Naive thymus-derived CD4-positive, alpha-beta T cell (primary cell): ENCODE measurements at regions of chr3 and their contacts with region 1.

Region 1: GRCh38 chr3:152291649-152292066 is 22.9 kb downstream of the MBNL1 start:
- DNase-seq: no peak
- ATAC-seq: peak; percentile 58
- H3K4me3 ChIP-seq: no peak overlapping the region
- H3K4me3 Mint-ChIP-seq: peak overlapping the region; percentile 51 to 78 (median 73)
- H3K27ac ChIP-seq: peak overlapping the region; percentile 40
- H3K27ac Mint-ChIP-seq: peak overlapping the region; percentile 30 to 87 (median 71)
- H3K4me1 ChIP-seq: peaks cover 62 to 82% of the 10 kb centered on the region in 2 donors
- H3K4me1 Mint-ChIP-seq: peaks cover 54 to 96% (median 85%) of the 10 kb centered on the region in 7 donors
- H3K27me3 ChIP-seq: no peaks in the 10 kb centered on the region
- H3K27me3 Mint-ChIP-seq: no peaks in the 10 kb centered on the region

Region 2: DNA sequence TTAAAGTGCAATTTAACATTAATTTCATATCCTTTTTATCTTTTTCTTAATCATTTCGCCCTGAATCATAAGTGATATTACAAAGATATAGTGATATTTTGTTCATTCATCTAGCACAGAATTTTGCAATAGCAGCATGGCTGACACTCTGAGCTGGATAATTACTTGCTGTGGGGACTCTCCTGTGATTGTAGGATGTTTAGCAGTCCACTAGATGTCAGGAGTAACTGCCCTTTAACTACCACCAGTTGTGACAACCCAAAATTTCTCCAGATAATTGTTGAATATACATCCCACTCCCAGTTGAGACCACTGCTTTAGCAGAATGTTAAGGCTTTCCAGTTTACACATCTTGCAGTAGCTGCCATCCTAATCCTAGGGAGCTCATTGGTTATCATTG is 219.7 kb before region 1 on chr3:
- CTCF ChIA-PET with region 1: interaction called, 3 read pairs
- POLR2A ChIA-PET with region 1: no interaction called
- intact Hi-C with region 1: loop called (anchors 5 kb)
- DNase-seq: peak in 6 of 9 donors; percentile 10 to 43 (median 32)
- ATAC-seq: peak; percentile 75
- H3K4me3 ChIP-seq: no peak overlapping the region
- H3K4me3 Mint-ChIP-seq: no peak overlapping the region
- H3K27ac ChIP-seq: no peak overlapping the region
- H3K27ac Mint-ChIP-seq: no peak overlapping the region
- H3K4me1 ChIP-seq: peaks cover 0 to 5% of the 10 kb centered on the region in 2 donors
- H3K4me1 Mint-ChIP-seq: peaks cover 0 to 6% (median 3%) of the 10 kb centered on the region in 7 donors
- H3K27me3 ChIP-seq: no peaks in the 10 kb centered on the region
- H3K27me3 Mint-ChIP-seq: peaks cover 0 to 6% (median 0%) of the 10 kb centered on the region in 5 donors

Region 3: GRCh38 chr3:152281133-152281713 is 10.4 kb before region 1 on chr3:
- CTCF ChIA-PET with region 1: interaction called, 3 read pairs
- POLR2A ChIA-PET with region 1: interaction called, 17 read pairs
- intact Hi-C with region 1: loop called (anchors 1 to 2 kb)
- DNase-seq: no peak
- ATAC-seq: peak; percentile 12
- H3K4me3 ChIP-seq: peak overlapping the region; percentile 18
- H3K4me3 Mint-ChIP-seq: peak overlapping the region; percentile 64 to 79 (median 72)
- H3K27ac ChIP-seq: peak overlapping the region; percentile 49
- H3K27ac Mint-ChIP-seq: peak overlapping the region; percentile 6 to 94 (median 73)
- H3K4me1 ChIP-seq: peaks cover 47 to 86% of the 10 kb centered on the region in 2 donors
- H3K4me1 Mint-ChIP-seq: peaks cover 55 to 95% (median 85%) of the 10 kb centered on the region in 7 donors
- H3K27me3 ChIP-seq: no peaks in the 10 kb centered on the region
- H3K27me3 Mint-ChIP-seq: no peaks in the 10 kb centered on the region

Region 4: DNA sequence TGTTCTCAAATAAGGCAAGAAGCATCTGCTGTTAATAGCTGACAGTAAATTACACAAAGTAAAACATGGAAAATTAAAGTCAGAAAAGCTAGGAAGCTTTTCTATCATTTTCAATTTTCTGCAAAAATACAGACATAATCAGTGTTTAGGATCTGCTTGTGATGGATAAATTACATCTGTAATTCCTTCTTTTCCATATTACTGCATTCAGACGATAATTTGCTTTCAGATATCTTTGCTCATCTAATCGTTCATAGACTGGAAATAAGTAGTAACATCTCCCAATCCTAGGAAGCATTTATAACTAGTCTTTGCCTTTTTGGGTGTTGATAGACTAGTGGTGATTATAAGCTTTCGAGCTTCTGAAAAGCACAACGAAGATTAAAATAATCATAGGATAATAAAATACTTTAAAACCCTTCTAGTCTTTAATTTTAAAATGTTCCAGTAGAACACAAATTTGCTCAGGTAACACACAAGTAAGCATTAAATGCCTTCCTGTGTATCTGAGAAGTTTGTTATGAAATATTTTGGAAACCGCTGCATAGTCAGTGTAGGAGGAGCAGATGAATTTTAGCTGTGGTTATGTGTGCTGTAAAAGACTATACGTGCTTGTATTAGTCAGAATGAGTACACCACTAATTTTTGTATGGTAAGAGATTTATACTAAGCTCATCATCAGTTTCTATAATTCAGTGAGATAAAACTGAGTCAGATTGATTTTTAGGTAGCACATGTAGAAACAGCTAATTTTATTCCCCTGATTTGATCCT is 18.1 kb after region 1 on chr3:
- CTCF ChIA-PET with region 1: no interaction called
- POLR2A ChIA-PET with region 1: interaction called, 5 read pairs
- intact Hi-C with region 1: loop called in 1 of 2 experiments (anchors 2 kb)
- DNase-seq: peak in 3 of 9 donors; percentile 14 to 31 (median 27)
- ATAC-seq: peak; percentile 69
- H3K4me3 ChIP-seq: no peak overlapping the region
- H3K4me3 Mint-ChIP-seq: peak overlapping the region in 8 of 10 donors; percentile 9 to 57 (median 30)
- H3K27ac ChIP-seq: peak overlapping the region; percentile 56
- H3K27ac Mint-ChIP-seq: peak overlapping the region; percentile 15 to 88 (median 66)
- H3K4me1 ChIP-seq: peaks cover 50 to 68% of the 10 kb centered on the region in 2 donors
- H3K4me1 Mint-ChIP-seq: peaks cover 31 to 89% (median 83%) of the 10 kb centered on the region in 7 donors
- H3K27me3 ChIP-seq: no peaks in the 10 kb centered on the region
- H3K27me3 Mint-ChIP-seq: no peaks in the 10 kb centered on the region

Region 5: DNA sequence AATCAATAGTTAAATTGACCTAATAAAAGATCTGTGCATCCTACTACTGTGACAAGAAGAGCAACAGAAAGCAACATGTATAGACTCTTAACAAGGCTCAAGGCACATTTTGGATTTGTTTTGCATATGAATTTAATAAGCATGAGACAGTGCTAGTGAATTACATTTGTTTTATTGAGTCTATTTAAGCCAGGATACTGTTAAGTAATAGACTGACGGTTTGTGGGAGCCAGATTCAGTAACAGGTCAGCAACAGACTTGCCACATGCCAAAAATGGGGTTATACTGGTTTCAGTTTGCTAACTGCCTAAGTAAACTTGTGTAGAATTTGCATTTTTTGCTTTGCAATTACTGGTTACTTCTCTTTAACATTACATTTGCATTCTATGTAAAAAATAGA is 31.1 kb after region 1 on chr3:
- CTCF ChIA-PET with region 1: no interaction called
- POLR2A ChIA-PET with region 1: no interaction called
- intact Hi-C with region 1: loop called in 1 of 2 experiments (anchors 5 kb)
- DNase-seq: no peak
- ATAC-seq: peak; percentile 43
- H3K4me3 ChIP-seq: no peak overlapping the region
- H3K4me3 Mint-ChIP-seq: peak overlapping the region in 9 of 10 donors; percentile 17 to 78 (median 57)
- H3K27ac ChIP-seq: peak overlapping the region; percentile 11
- H3K27ac Mint-ChIP-seq: peak overlapping the region in 8 of 9 donors; percentile 3 to 77 (median 56)
- H3K4me1 ChIP-seq: peaks cover 46 to 60% of the 10 kb centered on the region in 2 donors
- H3K4me1 Mint-ChIP-seq: peaks cover 59 to 96% (median 92%) of the 10 kb centered on the region in 7 donors
- H3K27me3 ChIP-seq: no peaks in the 10 kb centered on the region
- H3K27me3 Mint-ChIP-seq: no peaks in the 10 kb centered on the region

Region 6: GRCh38 chr3:152339881-152340505 is 48.3 kb after region 1 on chr3:
- CTCF ChIA-PET with region 1: no interaction called
- POLR2A ChIA-PET with region 1: no interaction called
- intact Hi-C with region 1: no loop called
- DNase-seq: no peak
- ATAC-seq: no peak
- H3K4me3 ChIP-seq: no peak overlapping the region
- H3K4me3 Mint-ChIP-seq: peak overlapping the region in 6 of 10 donors; percentile 0 to 33 (median 26)
- H3K27ac ChIP-seq: no peak overlapping the region
- H3K27ac Mint-ChIP-seq: peak overlapping the region; percentile 21 to 76 (median 63)
- H3K4me1 ChIP-seq: peaks cover 22 to 33% of the 10 kb centered on the region in 2 donors
- H3K4me1 Mint-ChIP-seq: peaks cover 32 to 98% (median 85%) of the 10 kb centered on the region in 7 donors
- H3K27me3 ChIP-seq: no peaks in the 10 kb centered on the region
- H3K27me3 Mint-ChIP-seq: no peaks in the 10 kb centered on the region

Region 7: GRCh38 chr3:154180836-154181731 is 1889.4 kb after region 1 on chr3:
- CTCF ChIA-PET with region 1: no interaction called
- POLR2A ChIA-PET with region 1: no interaction called
- intact Hi-C with region 1: no loop called
- DNase-seq: no peak
- ATAC-seq: no peak
- H3K4me3 ChIP-seq: no peak overlapping the region
- H3K4me3 Mint-ChIP-seq: no peak overlapping the region
- H3K27ac ChIP-seq: no peak overlapping the region
- H3K27ac Mint-ChIP-seq: no peak overlapping the region
- H3K4me1 ChIP-seq: no peaks in the 10 kb centered on the region
- H3K4me1 Mint-ChIP-seq: peaks cover 0 to 2% (median 0%) of the 10 kb centered on the region in 7 donors
- H3K27me3 ChIP-seq: no peaks in the 10 kb centered on the region
- H3K27me3 Mint-ChIP-seq: peaks cover 0 to 24% (median 14%) of the 10 kb centered on the region in 5 donors